Natural killer cell (primary cell): ENCODE measurements at regions of chr7 and their contacts with region 1.

Region 1: DNA sequence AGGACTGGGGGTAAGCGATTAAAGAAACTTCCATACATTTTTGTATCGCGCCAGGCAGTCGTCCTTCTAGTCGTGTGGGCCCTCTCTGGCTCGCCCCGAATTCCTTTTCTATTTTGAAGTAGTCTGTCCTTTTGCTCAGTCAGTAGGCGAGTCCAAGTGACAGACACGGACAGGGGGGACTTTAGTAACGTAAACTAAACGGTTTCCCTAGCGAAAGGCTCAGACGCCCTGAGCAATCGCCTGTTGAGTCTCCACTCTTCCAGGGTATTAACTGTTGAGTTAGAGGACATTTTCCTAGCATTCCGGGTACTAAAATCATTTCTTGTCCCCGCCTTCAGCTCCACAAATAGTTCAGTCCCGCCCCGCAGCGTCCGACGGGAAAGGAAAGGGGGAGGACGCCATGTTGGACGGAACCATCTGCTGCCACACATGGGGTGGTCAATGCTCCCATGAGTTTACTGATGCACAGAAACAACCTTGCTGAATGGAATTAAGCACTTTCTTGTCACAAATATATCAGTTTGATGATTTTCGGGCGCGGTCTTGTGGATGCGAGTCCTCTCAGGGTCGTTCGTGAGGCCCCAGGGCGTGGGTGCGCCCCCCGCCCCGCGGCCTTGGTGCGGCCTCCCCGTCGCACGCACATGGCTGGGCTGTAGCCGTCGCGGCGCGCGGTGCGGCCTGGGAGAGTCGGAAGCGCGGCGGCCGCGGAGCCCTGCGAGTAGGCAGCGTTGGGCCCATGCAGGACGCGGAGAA is at the start of gene EIF3B:
- DNase-seq: peak; percentile 88 to 96
- ATAC-seq: peak; percentile 86 to 95 (median 87)
- H3K4me3 ChIP-seq: peak within 1 kb of the TSS; percentile 80
- H3K4me3 Mint-ChIP-seq: peak within 1 kb of the TSS; percentile 96
- H3K27ac ChIP-seq: peak within 1 kb of the TSS; percentile 99
- H3K27ac Mint-ChIP-seq: peak within 1 kb of the TSS; percentile 99 to 100
- H3K4me1 ChIP-seq: peaks cover 39% of the 10 kb centered on the region
- H3K4me1 Mint-ChIP-seq: peaks cover 32 to 33% of the 10 kb centered on the region in 2 donors
- H3K27me3 ChIP-seq: no peaks in the 10 kb centered on the region
- H3K27me3 Mint-ChIP-seq: no peaks in the 10 kb centered on the region
- CTCF ChIP-seq: no peak
- total RNA-seq, gene EIF3B: 194 to 219 (median 197) TPM

Region 2: GRCh38 chr7:2248984-2249694 is 105.2 kb before region 1 on chr7:
- intact Hi-C with region 1: loop called (anchors 5 kb)
- DNase-seq: peak in 1 of 2 donors; percentile 35
- ATAC-seq: peak; percentile 21 to 59 (median 25)
- H3K4me3 ChIP-seq: no peak overlapping the region
- H3K4me3 Mint-ChIP-seq: peak overlapping the region; percentile 85
- H3K27ac ChIP-seq: peak overlapping the region; percentile 40
- H3K27ac Mint-ChIP-seq: peak overlapping the region; percentile 72 to 82
- H3K4me1 ChIP-seq: peaks cover 73% of the 10 kb centered on the region
- H3K4me1 Mint-ChIP-seq: peaks cover 15 to 42% of the 10 kb centered on the region in 2 donors
- H3K27me3 ChIP-seq: no peaks in the 10 kb centered on the region
- H3K27me3 Mint-ChIP-seq: no peaks in the 10 kb centered on the region
- CTCF ChIP-seq: no peak

Region 3: GRCh38 chr7:2314209-2314955 is 40.0 kb before region 1 on chr7 and contains the start of gene SNX8:
- intact Hi-C with region 1: loop called (anchors 1 kb)
- DNase-seq: peak; percentile 94 to 95
- ATAC-seq: peak; percentile 93 to 99 (median 94)
- H3K4me3 ChIP-seq: peak within 1 kb of the TSS; percentile 85
- H3K4me3 Mint-ChIP-seq: peak within 1 kb of the TSS; percentile 96
- H3K27ac ChIP-seq: peak within 1 kb of the TSS; percentile 81
- H3K27ac Mint-ChIP-seq: peak within 1 kb of the TSS in 1 of 2 donors; percentile 77
- H3K4me1 ChIP-seq: peaks cover 23% of the 10 kb centered on the region
- H3K4me1 Mint-ChIP-seq: peaks cover 5 to 18% of the 10 kb centered on the region in 2 donors
- H3K27me3 ChIP-seq: no peaks in the 10 kb centered on the region
- H3K27me3 Mint-ChIP-seq: peaks cover 0 to 3% of the 10 kb centered on the region in 2 donors
- CTCF ChIP-seq: no peak
- total RNA-seq, gene SNX8: 8.3 to 15.7 (median 12.6) TPM